Right cardiac atrium (tissue), 5 donors: ENCODE measurements at regions of chr9 and their contacts with region 1.

Region 1: GRCh38 chr9:72038890-72039410 is 21.5 kb downstream of the C9orf57 start:
- DNase-seq: peak; percentile 63 to 83 (median 82)
- ATAC-seq: peak; percentile 85 to 89
- H3K4me3 ChIP-seq: no peak overlapping the region
- H3K27ac ChIP-seq: no peak overlapping the region
- H3K4me1 ChIP-seq: peaks cover 2% of the 10 kb centered on the region
- H3K27me3 ChIP-seq: no peaks in the 10 kb centered on the region

Region 2: DNA sequence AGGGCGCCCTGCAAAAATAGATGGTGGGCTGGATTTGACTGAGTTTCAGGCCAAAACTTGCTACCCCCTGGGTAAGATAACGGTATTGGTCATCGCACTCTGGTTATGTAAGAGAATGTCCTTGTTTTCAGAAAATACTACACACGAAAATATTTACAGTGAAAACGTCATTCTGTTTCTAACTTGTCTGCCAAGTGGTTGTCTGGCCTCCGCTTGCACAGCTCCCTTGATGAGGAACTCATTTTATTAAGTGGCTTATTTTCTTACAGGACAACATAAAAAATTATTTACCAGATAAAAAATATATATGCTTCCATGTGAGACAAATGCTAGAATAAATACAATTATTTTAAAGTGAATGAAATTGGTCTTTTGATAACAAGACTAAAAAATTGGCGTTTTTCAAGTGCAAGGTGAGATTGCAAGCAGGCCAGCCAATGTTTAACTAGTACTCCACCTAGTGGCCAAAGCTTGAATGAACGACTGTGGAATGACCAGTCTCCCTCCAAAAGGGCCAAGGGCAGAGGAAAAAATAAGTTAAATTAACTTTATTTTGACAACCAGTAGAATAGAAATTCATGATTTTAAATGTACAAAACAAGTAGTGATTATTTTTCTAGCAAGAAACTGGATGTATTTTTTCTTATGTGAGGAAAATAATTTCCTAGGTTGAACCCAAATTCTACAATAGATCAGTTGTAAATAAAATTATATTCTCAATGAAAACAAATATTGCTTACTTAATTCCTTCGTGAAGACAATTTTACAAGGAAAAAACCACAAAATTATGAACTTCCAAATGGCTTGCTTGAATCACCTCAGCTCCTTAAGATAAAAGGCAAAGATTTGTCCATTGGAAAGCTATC is 232.9 kb after region 1 on chr9:
- intact Hi-C with region 1: loop called (anchors 2 to 5 kb)
- DNase-seq: no peak
- ATAC-seq: peak in 1 of 2 donors; percentile 52
- H3K4me3 ChIP-seq: no peak overlapping the region
- H3K27ac ChIP-seq: no peak overlapping the region
- H3K4me1 ChIP-seq: no peaks in the 10 kb centered on the region
- H3K27me3 ChIP-seq: no peaks in the 10 kb centered on the region